Mammary epithelial cell (primary cell): ENCODE measurements at regions of chr13 and their contacts with region 1.

Region 1: DNA sequence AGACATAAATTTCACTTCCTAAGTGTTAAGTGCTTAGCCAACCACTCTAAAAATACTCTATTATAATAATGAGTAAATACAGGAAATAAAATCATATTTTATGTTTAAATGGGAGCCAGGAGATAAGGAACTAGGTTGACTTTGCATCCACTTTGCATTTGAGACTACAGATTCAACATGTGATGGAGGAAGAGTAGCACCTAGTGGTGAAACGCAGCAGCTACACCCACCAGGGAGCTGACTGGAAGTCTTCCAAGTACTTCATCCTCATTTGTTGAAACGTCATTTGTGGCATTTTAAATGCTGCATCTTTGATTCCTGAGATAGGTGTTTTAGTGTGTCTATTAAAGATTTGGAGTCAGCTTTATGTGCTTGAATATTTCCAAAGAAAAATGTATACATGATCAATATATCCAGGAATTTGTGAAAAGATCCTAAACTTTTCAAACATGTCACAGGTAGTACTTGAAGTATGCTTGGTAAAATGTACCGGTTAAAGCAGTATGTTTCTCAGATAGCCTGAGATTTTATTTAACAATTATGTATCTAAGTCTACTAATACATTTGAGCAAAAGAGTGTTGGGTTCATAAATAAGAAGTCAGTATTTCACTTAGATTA is 17.4 kb upstream of the KCTD12 start:
- DNase-seq: peak; percentile 64
- H3K4me3 ChIP-seq: no peak overlapping the region
- H3K27ac ChIP-seq: no peak overlapping the region
- H3K4me1 ChIP-seq: no peaks in the 10 kb centered on the region
- H3K27me3 ChIP-seq: peaks cover 1% of the 10 kb centered on the region
- CTCF ChIP-seq: peak; percentile 99 to 100

Region 2: DNA sequence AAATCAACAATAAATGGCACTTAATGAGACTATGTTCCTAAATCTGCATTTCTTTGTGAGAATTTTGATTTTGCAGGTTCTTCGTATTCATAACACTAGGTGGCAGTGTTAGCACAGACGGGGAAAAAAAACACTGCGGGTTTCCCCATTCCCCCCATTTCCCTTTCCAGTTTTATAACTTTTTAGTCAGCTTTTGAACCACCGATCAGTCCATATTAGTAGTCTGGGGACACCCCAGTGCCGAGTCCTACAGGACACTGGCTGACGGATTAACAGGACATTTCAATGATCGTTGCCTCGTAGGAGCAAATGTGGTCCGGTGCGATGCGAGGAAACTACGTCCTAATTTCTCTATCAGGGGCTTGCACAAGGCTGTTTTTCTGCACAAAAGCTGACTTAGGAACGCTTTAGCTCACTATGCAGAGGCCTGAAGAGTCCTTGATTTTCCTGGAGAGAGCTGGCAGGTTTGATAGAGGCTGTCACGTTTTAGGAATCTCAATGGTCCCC is 1033.2 kb before region 1 on chr13:
- CTCF ChIA-PET with region 1: interaction called, 3 read pairs
- dilution Hi-C with region 1: loop called (anchors 25 kb)
- in situ Hi-C with region 1: loop called (anchors 10 to 25 kb)
- intact Hi-C with region 1: loop called (anchors 1 kb)
- DNase-seq: no peak
- H3K4me3 ChIP-seq: peak overlapping the region; percentile 44 to 56 (median 55)
- H3K27ac ChIP-seq: peak overlapping the region; percentile 3
- H3K4me1 ChIP-seq: peaks cover 5% of the 10 kb centered on the region
- H3K27me3 ChIP-seq: peaks cover 1% of the 10 kb centered on the region
- CTCF ChIP-seq: peak; percentile 76 to 77

Region 3: GRCh38 chr13:76473552-76474134 is 430.0 kb before region 1 on chr13:
- CTCF ChIA-PET with region 1: no interaction called
- dilution Hi-C with region 1: no loop called
- in situ Hi-C with region 1: no loop called
- intact Hi-C with region 1: loop called (anchors 1 kb)
- DNase-seq: peak; percentile 57
- H3K4me3 ChIP-seq: no peak overlapping the region
- H3K27ac ChIP-seq: no peak overlapping the region
- H3K4me1 ChIP-seq: no peaks in the 10 kb centered on the region
- H3K27me3 ChIP-seq: peaks cover 2% of the 10 kb centered on the region
- CTCF ChIP-seq: peak; percentile 71 to 81

Region 4: DNA sequence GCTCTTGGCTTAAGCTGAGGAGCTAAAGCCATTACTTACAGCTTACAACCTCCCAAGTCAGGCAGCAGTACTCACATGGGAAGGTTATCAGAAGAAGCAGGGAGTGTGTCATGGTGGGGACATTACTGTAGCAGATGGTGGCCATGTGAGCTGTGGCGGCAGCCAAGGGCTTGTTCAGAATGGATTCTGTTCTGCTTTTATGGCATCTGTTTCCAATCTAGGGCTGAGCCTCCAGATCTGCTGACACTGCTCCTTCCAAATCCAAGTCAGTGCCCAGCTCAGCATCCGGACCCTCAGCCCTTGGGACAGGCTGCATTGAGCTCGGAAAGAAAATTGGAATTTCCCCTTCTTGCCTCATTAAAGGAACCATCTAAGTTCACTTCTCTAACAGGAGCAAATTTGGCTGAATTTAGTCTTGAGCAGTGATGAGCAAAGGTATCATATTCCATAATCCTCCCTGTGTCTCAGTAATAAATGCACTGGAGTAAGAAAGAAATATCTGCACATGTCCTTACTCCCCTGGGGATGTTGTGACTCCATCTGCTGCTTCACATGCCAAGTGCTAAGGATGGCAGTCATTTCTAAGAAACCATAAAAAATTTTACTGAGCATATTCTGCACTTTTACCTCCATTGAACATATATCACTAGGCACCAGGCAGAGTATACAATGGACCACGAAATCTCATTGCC is 91.3 kb before region 1 on chr13:
- CTCF ChIA-PET with region 1: no interaction called
- dilution Hi-C with region 1: no loop called
- in situ Hi-C with region 1: no loop called
- intact Hi-C with region 1: no loop called
- DNase-seq: no peak
- H3K4me3 ChIP-seq: no peak overlapping the region
- H3K27ac ChIP-seq: no peak overlapping the region
- H3K4me1 ChIP-seq: no peaks in the 10 kb centered on the region
- H3K27me3 ChIP-seq: no peaks in the 10 kb centered on the region
- CTCF ChIP-seq: no peak

Region 5: DNA sequence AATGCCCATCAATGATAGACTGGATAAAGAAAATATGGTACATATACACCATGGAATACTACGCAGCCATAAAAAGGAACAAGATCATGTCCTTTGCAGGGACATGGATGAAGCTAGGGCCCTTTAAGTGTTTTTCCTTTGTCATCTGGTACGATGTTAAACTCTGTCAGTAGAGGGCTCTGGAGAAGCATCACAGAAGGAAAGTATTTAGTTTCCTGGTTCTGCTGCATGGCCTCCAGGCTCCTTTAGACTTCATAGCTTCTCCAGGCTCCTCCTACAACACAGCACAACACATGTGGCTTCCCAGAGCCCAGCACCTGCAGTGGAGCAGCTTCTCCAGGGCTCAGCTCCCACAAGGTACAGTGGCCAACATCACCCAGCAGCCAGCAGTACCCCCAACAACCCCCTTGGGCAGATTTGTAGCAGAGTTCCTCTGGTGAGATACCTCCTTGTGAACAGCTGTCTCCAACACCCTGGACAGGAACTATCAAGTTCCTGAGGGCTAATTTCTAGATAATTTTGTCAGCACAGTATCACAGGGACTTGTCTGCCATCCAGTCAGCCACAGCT is 80.9 kb before region 1 on chr13:
- CTCF ChIA-PET with region 1: interaction called, 6 read pairs
- dilution Hi-C with region 1: no loop called
- in situ Hi-C with region 1: loop called in 1 of 2 experiments (anchors 5 kb)
- intact Hi-C with region 1: loop called (anchors 1 kb)
- DNase-seq: peak; percentile 46
- H3K4me3 ChIP-seq: no peak overlapping the region
- H3K27ac ChIP-seq: no peak overlapping the region
- H3K4me1 ChIP-seq: no peaks in the 10 kb centered on the region
- H3K27me3 ChIP-seq: peaks cover under 1% of the 10 kb centered on the region
- CTCF ChIP-seq: peak; percentile 27 to 63

Region 6: GRCh38 chr13:76980075-76980718 is 76.5 kb after region 1 on chr13:
- CTCF ChIA-PET with region 1: no interaction called
- dilution Hi-C with region 1: no loop called
- in situ Hi-C with region 1: no loop called
- intact Hi-C with region 1: loop called (anchors 1 kb)
- DNase-seq: peak; percentile 40
- H3K4me3 ChIP-seq: peak overlapping the region; percentile 24 to 32 (median 26)
- H3K27ac ChIP-seq: no peak overlapping the region
- H3K4me1 ChIP-seq: peaks cover 23% of the 10 kb centered on the region
- H3K27me3 ChIP-seq: no peaks in the 10 kb centered on the region
- CTCF ChIP-seq: peak; percentile 92 to 99